ENCODE measurements at regions of chr12 and their contacts with region 1.

Region 1: GRCh38 chr12:48857278-48857994 is 5.5 kb upstream of the DDX23 start:
- DNase-seq: no peak
- H3K4me3 ChIP-seq: no peak overlapping the region
- H3K27ac ChIP-seq: no peak overlapping the region
- H3K4me1 ChIP-seq: peaks cover 7% of the 10 kb centered on the region
- H3K27me3 ChIP-seq: no peaks in the 10 kb centered on the region
- CTCF ChIP-seq: no peak

Region 2: GRCh38 chr12:48890657-48891418 is 33.4 kb after region 1 on chr12:
- intact Hi-C with region 1: loop called (anchors 5 kb)
- DNase-seq: peak; percentile 79
- H3K4me3 ChIP-seq: peak overlapping the region; percentile 58
- H3K27ac ChIP-seq: no peak overlapping the region
- H3K4me1 ChIP-seq: peaks cover 9% of the 10 kb centered on the region
- H3K27me3 ChIP-seq: peaks cover 19% of the 10 kb centered on the region
- CTCF ChIP-seq: peak; percentile 95

Region 3: GRCh38 chr12:48965298-48965838 is 107.9 kb after region 1 on chr12:
- intact Hi-C with region 1: no loop called
- DNase-seq: no peak
- H3K4me3 ChIP-seq: no peak overlapping the region
- H3K27ac ChIP-seq: no peak overlapping the region
- H3K4me1 ChIP-seq: peaks cover 11% of the 10 kb centered on the region
- H3K27me3 ChIP-seq: peaks cover 58% of the 10 kb centered on the region
- CTCF ChIP-seq: peak; percentile 21

Measured in left ventricle myocardium inferior (tissue), 1 donor.